ENCODE measurements at regions of chr10 and their contacts with region 1.

Region 1: GRCh38 chr10:109902934-109903589 is 20.2 kb downstream of the XPNPEP1 start:
- DNase-seq: peak; percentile 55 to 74 (median 66)
- ATAC-seq: peak; percentile 73
- H3K4me3 ChIP-seq: no peak overlapping the region
- H3K27ac ChIP-seq: peak overlapping the region; percentile 31 to 69 (median 60)
- H3K4me1 ChIP-seq: peaks cover 72% of the 10 kb centered on the region
- H3K27me3 ChIP-seq: no peaks in the 10 kb centered on the region
- CTCF ChIP-seq: no peak
- POLR2A ChIP-seq: no peak

Region 2: GRCh38 chr10:109978481-109978880 is 75.4 kb after region 1 on chr10:
- intact Hi-C with region 1: loop called (anchors 10 kb)
- DNase-seq: peak; percentile 39 to 69 (median 62)
- ATAC-seq: no peak
- H3K4me3 ChIP-seq: no peak overlapping the region
- H3K27ac ChIP-seq: no peak overlapping the region
- H3K4me1 ChIP-seq: peaks cover 47% of the 10 kb centered on the region
- H3K27me3 ChIP-seq: no peaks in the 10 kb centered on the region
- CTCF ChIP-seq: peak in 6 of 7 experiments; percentile 60 to 76 (median 66)
- POLR2A ChIP-seq: no peak